ENCODE measurements at regions of chr4 and their contacts with region 1.

Region 1: GRCh38 chr4:6200011-6200921 is at the start of gene JAKMIP1:
- DNase-seq: peak; percentile 93
- ATAC-seq: peak; percentile 70
- H3K4me3 Mint-ChIP-seq: peak within 1 kb of the TSS; percentile 94
- H3K27ac Mint-ChIP-seq: peak within 1 kb of the TSS; percentile 80
- H3K4me1 Mint-ChIP-seq: peaks cover 48% of the 10 kb centered on the region
- H3K27me3 Mint-ChIP-seq: peaks cover 11% of the 10 kb centered on the region
- total RNA-seq, gene JAKMIP1: 41.7 to 57.8 TPM

Region 2: DNA sequence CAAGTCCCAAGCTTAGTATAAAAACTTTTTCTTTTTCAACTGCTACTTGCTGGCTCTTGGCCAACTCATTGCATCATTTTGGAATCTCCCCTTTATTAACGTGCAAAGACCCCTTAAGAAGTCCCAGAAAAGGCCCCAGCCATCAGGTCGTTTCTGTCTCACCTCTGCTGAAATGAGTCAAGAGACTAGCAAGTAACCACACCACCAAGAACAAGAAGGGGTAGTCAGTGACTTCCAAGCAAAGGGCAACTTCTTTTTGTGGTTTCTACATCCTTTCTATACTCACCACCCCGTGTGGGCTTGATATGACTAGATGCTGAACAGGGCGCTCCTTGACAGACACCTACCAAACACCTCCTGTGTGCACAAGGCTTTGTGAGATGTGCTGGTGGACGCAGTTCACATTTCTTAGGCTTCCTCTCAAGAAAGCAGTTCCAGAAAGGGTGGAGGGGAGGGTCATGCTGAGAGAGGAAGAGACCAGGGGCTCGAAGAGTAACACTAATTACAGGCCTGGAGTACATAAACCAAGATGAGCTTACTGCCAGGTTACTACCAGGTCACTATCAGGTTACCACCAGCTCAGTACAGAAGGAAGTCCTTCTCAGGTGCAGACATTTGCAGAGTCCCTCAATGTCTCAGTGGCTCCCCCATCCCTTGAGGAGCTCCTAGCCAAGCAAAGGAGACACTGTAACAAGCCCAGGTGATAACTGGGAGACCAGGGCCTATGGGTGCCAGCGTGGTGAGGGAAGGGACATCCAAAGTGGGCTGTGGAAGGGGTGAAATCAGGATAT is 19.2 kb before region 1 on chr4:
- CTCF ChIA-PET with region 1: interaction called, 104 read pairs
- DNase-seq: peak; percentile 91
- ATAC-seq: peak; percentile 84
- H3K4me3 Mint-ChIP-seq: peak overlapping the region; percentile 60
- H3K27ac Mint-ChIP-seq: peak overlapping the region; percentile 98
- H3K4me1 Mint-ChIP-seq: peaks cover 92% of the 10 kb centered on the region
- H3K27me3 Mint-ChIP-seq: no peaks in the 10 kb centered on the region